ENCODE measurements at regions of chr4 and their contacts with region 1.

Region 1: GRCh38 chr4:128809477-128810330 is at the start of gene JADE1:
- DNase-seq: peak; percentile 79 to 87
- ATAC-seq: peak; percentile 51 to 55
- H3K4me3 ChIP-seq: peak within 1 kb of the TSS; percentile 68 to 97 (median 90)
- H3K27ac ChIP-seq: peak within 1 kb of the TSS; percentile 90 to 95 (median 93)
- H3K4me1 ChIP-seq: peaks cover 7 to 18% of the 10 kb centered on the region in 2 donors
- H3K27me3 ChIP-seq: no peaks in the 10 kb centered on the region
- CTCF ChIP-seq: peak; percentile 25 to 72 (median 62)
- POLR2A ChIP-seq: peak; percentile 57 to 75
- total RNA-seq, gene JADE1: 14.2 to 21.1 (median 14.9) TPM

Region 2: DNA sequence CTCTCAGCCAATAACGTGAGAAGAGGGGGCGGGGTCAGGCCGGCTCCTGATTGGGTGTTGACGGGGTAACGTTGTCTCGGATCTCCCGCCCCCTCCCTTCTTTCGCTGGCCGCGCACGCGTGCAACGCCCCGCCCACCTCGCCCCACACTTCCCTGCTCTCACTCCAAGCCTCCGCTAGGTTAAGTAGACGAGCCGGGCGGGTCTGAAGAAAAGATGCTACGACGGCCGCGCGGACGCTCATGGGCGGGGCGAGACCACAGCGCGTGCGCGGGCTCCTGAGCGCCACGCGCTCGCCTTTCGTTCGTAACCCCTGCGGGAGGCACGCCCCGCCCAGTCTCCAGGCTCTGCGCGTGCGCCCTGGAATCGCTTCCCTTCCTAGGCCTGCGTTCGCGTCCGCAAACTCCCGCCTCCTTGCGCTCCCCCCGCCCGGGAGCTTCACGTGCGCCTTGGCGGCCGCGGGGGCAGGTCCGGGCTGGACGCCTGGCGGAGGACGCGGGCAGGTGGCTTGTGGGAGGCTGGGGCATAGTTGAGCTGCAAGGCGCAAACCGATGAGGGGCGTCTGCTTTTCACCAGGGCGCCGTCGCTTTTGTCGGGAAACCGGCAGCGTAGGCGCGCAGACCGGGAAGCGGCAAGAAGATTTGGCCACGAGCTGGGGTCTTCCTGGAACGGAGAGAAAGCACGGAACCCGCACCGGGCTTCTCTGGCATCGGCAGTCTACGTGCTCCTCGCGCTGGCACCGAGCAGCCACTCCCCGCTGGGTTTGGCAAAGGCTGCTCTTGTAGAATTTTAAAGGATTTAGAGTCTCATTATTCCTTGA is 521.6 kb before region 1 on chr4:
- in situ Hi-C with region 1: loop called in 1 of 4 experiments (anchors 25 kb)
- intact Hi-C with region 1: loop called (anchors 1 kb)
- DNase-seq: peak; percentile 98 to 99
- ATAC-seq: peak; percentile 86 to 89
- H3K4me3 ChIP-seq: peak overlapping the region; percentile 81 to 98 (median 92)
- H3K27ac ChIP-seq: peak overlapping the region; percentile 90 to 100 (median 96)
- H3K4me1 ChIP-seq: peaks cover 28 to 30% of the 10 kb centered on the region in 2 donors
- H3K27me3 ChIP-seq: no peaks in the 10 kb centered on the region
- CTCF ChIP-seq: peak; percentile 46 to 61 (median 56)
- POLR2A ChIP-seq: peak; percentile 71 to 83

Region 3: DNA sequence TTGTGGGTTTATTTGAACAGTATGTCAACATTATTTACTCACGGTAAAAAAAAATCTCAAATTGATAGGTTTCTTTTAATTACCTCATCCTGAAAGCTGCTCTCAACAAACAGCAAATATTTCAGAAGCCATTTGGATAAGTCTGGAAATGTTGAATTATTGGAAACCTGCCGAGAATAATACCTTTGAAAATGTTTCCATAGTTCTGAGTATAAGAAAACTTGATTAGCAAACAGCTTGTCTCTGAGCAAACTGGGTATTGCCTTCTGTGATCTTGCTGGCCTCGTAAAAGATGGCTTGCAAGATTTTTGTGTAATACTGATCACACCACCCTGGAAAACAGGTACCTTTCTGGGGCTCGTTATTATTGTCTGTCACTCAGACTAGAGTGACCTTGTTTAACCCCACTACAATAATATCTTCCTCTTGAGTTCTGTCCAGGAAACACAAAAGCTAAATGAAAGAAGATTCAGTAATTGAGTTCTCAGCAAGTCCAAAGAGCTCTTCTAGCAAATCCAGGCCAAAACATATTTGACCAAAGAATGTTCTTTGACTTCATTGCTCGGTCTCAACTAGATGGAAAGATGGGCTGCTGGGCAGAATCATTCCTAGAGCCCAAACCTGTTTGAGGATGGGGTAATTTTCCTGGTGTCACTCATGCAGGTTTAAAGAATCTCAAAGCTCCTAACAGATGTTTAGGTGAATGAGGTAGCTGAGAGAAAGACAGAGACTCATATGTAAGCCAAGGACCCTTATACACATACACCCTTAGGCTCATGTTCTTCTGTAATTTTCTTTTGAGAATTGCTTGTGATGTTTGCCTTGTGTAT is 255.8 kb before region 1 on chr4:
- in situ Hi-C with region 1: loop called in 1 of 4 experiments (anchors 25 kb)
- intact Hi-C with region 1: loop called (anchors 5 kb)
- DNase-seq: no peak
- ATAC-seq: peak in 1 of 2 donors; percentile 15
- H3K4me3 ChIP-seq: peak overlapping the region; percentile 59 to 83 (median 71)
- H3K27ac ChIP-seq: peak overlapping the region; percentile 88 to 97 (median 96)
- H3K4me1 ChIP-seq: peaks cover 11 to 13% of the 10 kb centered on the region in 2 donors
- H3K27me3 ChIP-seq: no peaks in the 10 kb centered on the region
- CTCF ChIP-seq: no peak
- POLR2A ChIP-seq: no peak

Region 4: DNA sequence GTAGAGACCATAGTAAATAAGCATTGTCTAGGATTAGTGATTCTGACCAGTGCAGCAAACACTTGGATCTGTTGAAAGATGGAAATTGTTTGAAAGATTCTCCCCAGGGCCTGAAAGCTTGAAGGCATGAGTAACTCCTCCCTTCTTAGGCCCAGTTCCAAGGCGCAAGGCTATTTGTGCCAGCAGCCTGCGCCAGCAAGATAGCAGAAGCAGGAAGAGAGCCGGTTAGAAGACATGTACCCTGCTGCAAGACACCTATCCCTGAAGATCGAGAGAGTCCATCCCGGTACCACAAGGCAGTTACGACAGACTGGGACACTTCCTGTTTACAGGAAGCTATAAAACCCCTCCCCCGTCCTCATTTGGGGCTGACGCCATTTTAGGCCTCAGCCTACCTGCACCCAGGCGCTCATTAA is 72.6 kb before region 1 on chr4:
- in situ Hi-C with region 1: no loop called
- intact Hi-C with region 1: no loop called
- DNase-seq: no peak
- ATAC-seq: no peak
- H3K4me3 ChIP-seq: no peak overlapping the region
- H3K27ac ChIP-seq: no peak overlapping the region
- H3K4me1 ChIP-seq: no peaks in the 10 kb centered on the region
- H3K27me3 ChIP-seq: no peaks in the 10 kb centered on the region
- CTCF ChIP-seq: no peak
- POLR2A ChIP-seq: no peak

Region 5: DNA sequence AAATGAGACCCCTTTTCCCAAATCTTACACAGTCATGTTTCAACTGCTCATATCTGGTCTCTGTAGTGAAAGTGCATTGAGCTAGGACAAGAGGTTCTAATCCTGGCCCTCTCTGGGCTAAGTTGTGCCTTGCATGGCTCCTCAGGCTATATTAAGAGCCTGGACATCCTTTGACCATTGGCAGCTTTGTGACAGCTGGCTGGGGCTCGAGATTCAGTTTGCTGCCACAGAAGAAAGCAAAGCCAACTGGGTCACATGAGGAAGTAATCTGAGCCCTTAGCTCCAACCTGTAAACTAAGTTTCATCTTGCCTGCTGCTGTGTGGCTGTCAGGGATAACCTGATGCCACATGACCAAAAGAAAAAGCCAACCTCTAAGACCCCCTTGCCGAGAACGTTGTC is 52.0 kb before region 1 on chr4:
- in situ Hi-C with region 1: no loop called
- intact Hi-C with region 1: loop called (anchors 2 kb)
- DNase-seq: peak; percentile 87 to 91
- ATAC-seq: peak; percentile 100
- H3K4me3 ChIP-seq: no peak overlapping the region
- H3K27ac ChIP-seq: peak overlapping the region; percentile 78 to 86 (median 81)
- H3K4me1 ChIP-seq: peaks cover 11 to 20% of the 10 kb centered on the region in 2 donors
- H3K27me3 ChIP-seq: no peaks in the 10 kb centered on the region
- CTCF ChIP-seq: peak in 2 of 5 experiments; percentile 24 to 31
- POLR2A ChIP-seq: peak; percentile 44 to 77

Region 6: GRCh38 chr4:128847082-128847724 is 37.5 kb after region 1 on chr4:
- in situ Hi-C with region 1: no loop called
- intact Hi-C with region 1: loop called (anchors 2 kb)
- DNase-seq: no peak
- ATAC-seq: peak in 1 of 2 donors; percentile 37
- H3K4me3 ChIP-seq: no peak overlapping the region
- H3K27ac ChIP-seq: peak overlapping the region; percentile 27 to 72 (median 56)
- H3K4me1 ChIP-seq: peaks cover 27 to 40% of the 10 kb centered on the region in 2 donors
- H3K27me3 ChIP-seq: no peaks in the 10 kb centered on the region
- CTCF ChIP-seq: no peak
- POLR2A ChIP-seq: no peak

Region 7: DNA sequence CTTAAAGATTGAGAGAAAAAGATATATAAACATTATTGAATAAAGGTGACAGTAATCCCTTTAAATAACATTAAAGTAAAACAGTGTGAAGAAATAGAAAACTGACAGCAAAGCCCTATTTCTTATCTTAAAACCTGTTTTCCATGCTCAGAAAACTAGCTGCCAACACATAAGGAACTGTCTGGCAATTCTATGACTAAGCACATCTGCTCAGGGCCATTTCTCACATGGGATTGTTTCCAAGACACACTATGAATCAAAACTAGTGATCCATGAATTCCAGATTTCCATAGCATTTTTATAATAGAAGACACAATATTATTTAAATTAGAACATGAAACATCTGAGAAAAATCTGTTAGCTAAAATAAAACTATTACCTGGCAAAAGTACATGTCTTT is 170.2 kb after region 1 on chr4:
- in situ Hi-C with region 1: no loop called
- intact Hi-C with region 1: no loop called
- DNase-seq: no peak
- ATAC-seq: no peak
- H3K4me3 ChIP-seq: no peak overlapping the region
- H3K27ac ChIP-seq: no peak overlapping the region
- H3K4me1 ChIP-seq: no peaks in the 10 kb centered on the region
- H3K27me3 ChIP-seq: no peaks in the 10 kb centered on the region
- CTCF ChIP-seq: no peak
- POLR2A ChIP-seq: no peak

Measured in gastrocnemius medialis (tissue), 4 donors.